ENCODE measurements at regions of chr7 and their contacts with region 1.

Region 1: GRCh38 chr7:27160546-27161213 is 4.2 kb upstream of the HOXA7 start:
- DNase-seq: peak; percentile 94
- H3K4me3 Mint-ChIP-seq: peak overlapping the region; percentile 76
- H3K27ac Mint-ChIP-seq: no peak overlapping the region
- H3K4me1 Mint-ChIP-seq: no peaks in the 10 kb centered on the region
- H3K27me3 Mint-ChIP-seq: no peaks in the 10 kb centered on the region
- CTCF ChIP-seq: peak; percentile 100

Region 2: DNA sequence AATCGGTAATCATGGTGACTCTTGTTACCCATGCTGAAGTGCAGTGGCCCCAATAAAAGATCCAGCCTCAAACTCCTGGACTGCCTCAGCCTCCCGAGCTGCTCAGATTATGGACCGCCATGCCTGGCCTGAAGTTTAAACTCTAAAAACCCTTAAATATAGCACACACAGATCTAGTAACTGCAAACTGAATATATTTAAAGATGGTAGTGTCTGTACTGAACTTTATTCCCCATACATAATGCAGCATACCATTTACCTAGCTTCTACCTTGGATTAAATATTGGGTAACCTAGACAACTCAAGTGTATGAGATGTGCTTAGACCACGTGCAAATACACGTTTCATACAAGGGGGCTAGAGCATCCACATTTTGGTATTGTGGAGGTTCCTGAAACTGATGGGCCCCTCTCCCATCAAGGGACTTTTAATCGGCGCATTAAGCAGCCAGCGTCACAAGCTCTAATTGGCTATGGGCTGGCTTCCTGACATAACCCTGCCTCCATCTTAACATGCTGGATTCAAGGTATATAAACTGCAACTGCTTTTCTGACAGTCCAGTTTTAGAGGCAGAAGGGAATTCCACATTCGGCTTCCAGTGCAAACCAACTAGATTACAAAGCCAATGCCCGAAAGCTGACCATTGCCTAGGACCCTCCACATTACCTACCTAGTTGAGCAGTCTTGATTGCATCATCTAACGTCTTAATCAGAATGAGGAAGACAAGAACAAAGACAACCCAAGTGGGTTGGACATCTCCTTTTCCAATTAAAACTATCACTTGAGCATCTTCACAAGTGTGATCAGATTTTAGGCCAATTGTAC is 973.1 kb before region 1 on chr7:
- CTCF ChIA-PET with region 1: no interaction called
- intact Hi-C with region 1: loop called (anchors 5 kb)
- DNase-seq: no peak
- H3K4me3 Mint-ChIP-seq: no peak overlapping the region
- H3K27ac Mint-ChIP-seq: peak overlapping the region; percentile 41
- H3K4me1 Mint-ChIP-seq: peaks cover 76% of the 10 kb centered on the region
- H3K27me3 Mint-ChIP-seq: no peaks in the 10 kb centered on the region
- CTCF ChIP-seq: no peak

Region 3: GRCh38 chr7:26680587-26680986 is 480.1 kb before region 1 on chr7:
- CTCF ChIA-PET with region 1: interaction called, 31 read pairs
- intact Hi-C with region 1: loop called (anchors 1 kb)
- DNase-seq: no peak
- H3K4me3 Mint-ChIP-seq: no peak overlapping the region
- H3K27ac Mint-ChIP-seq: no peak overlapping the region
- H3K4me1 Mint-ChIP-seq: no peaks in the 10 kb centered on the region
- H3K27me3 Mint-ChIP-seq: no peaks in the 10 kb centered on the region
- CTCF ChIP-seq: no peak

Region 4: GRCh38 chr7:26686448-26686981 is 474.2 kb before region 1 on chr7:
- CTCF ChIA-PET with region 1: interaction called, 31 read pairs
- intact Hi-C with region 1: loop called (anchors 1 kb)
- DNase-seq: peak; percentile 11
- H3K4me3 Mint-ChIP-seq: no peak overlapping the region
- H3K27ac Mint-ChIP-seq: no peak overlapping the region
- H3K4me1 Mint-ChIP-seq: no peaks in the 10 kb centered on the region
- H3K27me3 Mint-ChIP-seq: no peaks in the 10 kb centered on the region
- CTCF ChIP-seq: peak; percentile 74

Region 5: GRCh38 chr7:26853788-26854393 is 306.8 kb before region 1 on chr7:
- CTCF ChIA-PET with region 1: interaction called, 14 read pairs
- intact Hi-C with region 1: no loop called
- DNase-seq: no peak
- H3K4me3 Mint-ChIP-seq: no peak overlapping the region
- H3K27ac Mint-ChIP-seq: no peak overlapping the region
- H3K4me1 Mint-ChIP-seq: peaks cover 5% of the 10 kb centered on the region
- H3K27me3 Mint-ChIP-seq: no peaks in the 10 kb centered on the region
- CTCF ChIP-seq: peak; percentile 69

Region 6: GRCh38 chr7:26912371-26912770 is 248.3 kb before region 1 on chr7:
- CTCF ChIA-PET with region 1: no interaction called
- intact Hi-C with region 1: no loop called
- DNase-seq: no peak
- H3K4me3 Mint-ChIP-seq: no peak overlapping the region
- H3K27ac Mint-ChIP-seq: no peak overlapping the region
- H3K4me1 Mint-ChIP-seq: peaks cover 33% of the 10 kb centered on the region
- H3K27me3 Mint-ChIP-seq: no peaks in the 10 kb centered on the region
- CTCF ChIP-seq: no peak

Region 7: DNA sequence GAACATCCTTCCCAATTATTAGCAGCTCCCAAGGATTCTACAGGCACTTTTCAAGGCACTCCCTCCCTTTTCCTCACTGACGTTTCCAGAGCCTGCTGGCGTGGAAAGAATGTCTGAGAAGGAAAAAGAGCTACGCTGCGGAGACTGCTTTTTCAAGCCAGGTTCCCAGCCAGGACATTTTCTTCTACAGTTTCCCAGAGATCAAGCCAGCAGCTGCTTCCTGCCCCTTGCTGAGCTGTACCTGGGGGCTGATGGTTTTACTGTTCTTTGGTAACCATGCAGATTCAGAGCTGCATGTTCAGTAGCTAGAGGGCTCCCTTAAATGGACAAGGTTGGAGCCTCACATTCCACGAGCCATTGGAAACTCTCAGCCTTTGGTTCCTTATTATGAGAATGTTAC is 215.3 kb after region 1 on chr7:
- CTCF ChIA-PET with region 1: no interaction called
- intact Hi-C with region 1: no loop called
- DNase-seq: no peak
- H3K4me3 Mint-ChIP-seq: no peak overlapping the region
- H3K27ac Mint-ChIP-seq: no peak overlapping the region
- H3K4me1 Mint-ChIP-seq: peaks cover 16% of the 10 kb centered on the region
- H3K27me3 Mint-ChIP-seq: no peaks in the 10 kb centered on the region
- CTCF ChIP-seq: no peak